Activated T-helper 1 cell treated with anti-CD3 and anti-CD28 coated beads, Interleukin-12 subunit alpha, Interleukin-12 subunit beta, Interleukin-2, Interleukin-4 antibody, amounts not matched to agents 30 ng/mL and 10 ng/mL and 1 ng/mL, durations not matched to agents 14 hours and 24 hours and 36 hours (primary cell): ENCODE measurements at regions of chr4 and their contacts with region 1.

Region 1: GRCh38 chr4:24686871-24687680 is 102.7 kb upstream of the DHX15 start:
- DNase-seq: no peak
- H3K4me3 Mint-ChIP-seq: no peak overlapping the region
- H3K27ac Mint-ChIP-seq: no peak overlapping the region
- H3K4me1 Mint-ChIP-seq: no peaks in the 10 kb centered on the region
- H3K27me3 Mint-ChIP-seq: peaks cover 5% of the 10 kb centered on the region

Region 2: GRCh38 chr4:22895482-22895881 is 1791.6 kb before region 1 on chr4:
- intact Hi-C with region 1: no loop called
- DNase-seq: no peak
- H3K4me3 Mint-ChIP-seq: no peak overlapping the region
- H3K27ac Mint-ChIP-seq: no peak overlapping the region
- H3K4me1 Mint-ChIP-seq: no peaks in the 10 kb centered on the region
- H3K27me3 Mint-ChIP-seq: no peaks in the 10 kb centered on the region

Region 3: GRCh38 chr4:24472514-24473308 is 214.4 kb before region 1 on chr4:
- intact Hi-C with region 1: loop called (anchors 5 kb)
- DNase-seq: peak; percentile 43
- H3K4me3 Mint-ChIP-seq: peak overlapping the region; percentile 92
- H3K27ac Mint-ChIP-seq: peak overlapping the region; percentile 92
- H3K4me1 Mint-ChIP-seq: peaks cover 47% of the 10 kb centered on the region
- H3K27me3 Mint-ChIP-seq: peaks cover 62% of the 10 kb centered on the region

Region 4: DNA sequence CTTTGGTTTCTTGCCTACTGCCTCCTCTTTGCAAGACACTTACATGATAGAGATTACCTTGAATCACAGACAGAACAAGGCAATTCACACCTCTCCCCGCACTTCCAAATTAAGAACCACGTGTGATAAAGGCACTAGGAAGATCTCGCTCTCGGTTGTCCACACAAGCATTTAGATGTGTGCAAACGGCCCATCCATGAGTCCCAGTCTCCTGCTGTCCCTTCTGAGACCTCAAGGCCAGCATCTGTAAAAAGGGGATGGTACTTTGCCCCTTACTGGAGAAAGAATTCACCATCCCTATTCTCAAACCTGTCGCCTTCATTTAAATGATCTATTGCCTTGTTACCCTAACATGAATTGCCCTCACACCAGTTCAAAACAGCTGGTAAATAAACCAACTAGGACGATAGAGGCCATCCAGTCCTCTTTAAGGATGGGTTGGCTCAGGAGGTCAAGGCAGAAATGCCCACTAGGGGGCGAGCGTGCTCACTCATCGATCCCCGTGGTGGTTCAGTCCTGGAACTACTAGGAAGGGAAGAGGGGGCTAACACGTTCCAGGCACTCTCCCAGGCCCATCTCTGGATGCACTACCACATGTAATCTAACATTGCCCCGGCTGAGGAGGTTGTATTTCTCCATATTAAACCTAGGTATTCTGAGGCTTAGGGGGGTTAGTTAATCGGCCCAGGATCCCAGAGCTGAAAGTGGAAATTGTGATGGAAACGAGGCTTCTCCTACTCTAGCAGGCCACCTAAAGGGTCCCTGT is 198.5 kb before region 1 on chr4:
- intact Hi-C with region 1: loop called (anchors 1 kb)
- DNase-seq: peak; percentile 47
- H3K4me3 Mint-ChIP-seq: no peak overlapping the region
- H3K27ac Mint-ChIP-seq: no peak overlapping the region
- H3K4me1 Mint-ChIP-seq: no peaks in the 10 kb centered on the region
- H3K27me3 Mint-ChIP-seq: peaks cover 11% of the 10 kb centered on the region

Region 5: DNA sequence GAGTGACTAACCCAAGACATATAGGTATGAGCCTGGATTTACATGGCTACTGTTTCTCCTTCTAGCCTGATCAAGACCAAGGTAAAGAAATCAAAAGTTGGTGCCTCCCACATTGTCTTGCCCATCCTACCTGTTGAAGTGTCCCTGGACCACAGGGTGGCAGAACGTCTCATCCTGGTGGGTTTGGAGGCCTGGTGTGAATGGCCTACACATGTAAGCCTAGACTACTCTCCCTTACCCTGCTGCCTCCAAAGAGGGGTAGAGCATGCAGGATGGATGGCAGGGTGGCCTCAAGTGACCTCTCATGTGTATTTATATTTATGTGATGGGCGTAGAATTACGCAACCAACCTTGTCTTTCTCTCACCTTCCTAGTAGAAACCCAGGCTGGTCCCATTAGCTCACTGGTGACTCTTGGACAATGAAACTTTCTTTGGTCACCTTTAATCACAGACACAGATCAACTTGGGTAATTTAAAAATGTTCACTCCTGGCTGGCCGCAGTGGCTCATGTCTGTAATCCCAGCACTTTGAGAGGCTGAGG is 35.0 kb after region 1 on chr4:
- intact Hi-C with region 1: no loop called
- DNase-seq: no peak
- H3K4me3 Mint-ChIP-seq: no peak overlapping the region
- H3K27ac Mint-ChIP-seq: no peak overlapping the region
- H3K4me1 Mint-ChIP-seq: no peaks in the 10 kb centered on the region
- H3K27me3 Mint-ChIP-seq: no peaks in the 10 kb centered on the region

Region 6: DNA sequence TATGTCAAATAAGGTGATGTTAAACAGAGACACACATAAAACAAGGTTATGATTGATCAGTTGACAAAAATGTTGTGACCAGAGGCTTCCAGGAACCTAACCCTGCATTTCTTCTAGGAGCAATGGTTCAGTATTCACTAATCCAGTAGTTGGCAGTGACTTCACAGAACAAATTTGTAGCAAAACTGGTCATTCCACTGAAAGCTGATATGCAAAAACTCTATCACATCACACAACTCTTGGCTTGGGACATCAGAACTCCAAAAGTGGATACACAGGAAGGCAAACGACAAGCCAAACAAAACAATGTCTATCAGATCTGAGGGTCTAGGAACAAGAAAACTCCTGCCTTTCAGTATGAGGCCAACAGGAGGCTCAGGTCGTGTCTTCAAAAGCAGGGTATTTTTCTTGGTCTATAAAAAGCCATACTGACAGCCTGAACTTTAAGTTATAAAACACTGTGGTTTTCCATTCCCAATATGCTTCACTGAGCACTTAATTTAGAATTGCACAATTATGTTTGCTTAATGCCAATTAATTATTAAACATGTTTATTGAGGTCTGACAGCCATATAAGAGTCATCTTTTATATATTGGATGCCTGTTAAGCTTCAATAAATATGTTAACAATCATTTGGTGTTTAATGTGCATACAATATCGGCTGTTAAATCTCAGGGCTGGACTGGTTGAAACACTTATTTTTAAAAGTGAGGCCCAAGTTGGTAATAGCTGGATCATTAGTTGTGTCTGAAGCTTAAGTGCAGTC is 153.9 kb after region 1 on chr4:
- intact Hi-C with region 1: no loop called
- DNase-seq: no peak
- H3K4me3 Mint-ChIP-seq: no peak overlapping the region
- H3K27ac Mint-ChIP-seq: no peak overlapping the region
- H3K4me1 Mint-ChIP-seq: no peaks in the 10 kb centered on the region
- H3K27me3 Mint-ChIP-seq: no peaks in the 10 kb centered on the region